Ascending aorta (tissue), 2 donors: ENCODE measurements at regions of chr17 and their contacts with region 1.

Region 1: DNA sequence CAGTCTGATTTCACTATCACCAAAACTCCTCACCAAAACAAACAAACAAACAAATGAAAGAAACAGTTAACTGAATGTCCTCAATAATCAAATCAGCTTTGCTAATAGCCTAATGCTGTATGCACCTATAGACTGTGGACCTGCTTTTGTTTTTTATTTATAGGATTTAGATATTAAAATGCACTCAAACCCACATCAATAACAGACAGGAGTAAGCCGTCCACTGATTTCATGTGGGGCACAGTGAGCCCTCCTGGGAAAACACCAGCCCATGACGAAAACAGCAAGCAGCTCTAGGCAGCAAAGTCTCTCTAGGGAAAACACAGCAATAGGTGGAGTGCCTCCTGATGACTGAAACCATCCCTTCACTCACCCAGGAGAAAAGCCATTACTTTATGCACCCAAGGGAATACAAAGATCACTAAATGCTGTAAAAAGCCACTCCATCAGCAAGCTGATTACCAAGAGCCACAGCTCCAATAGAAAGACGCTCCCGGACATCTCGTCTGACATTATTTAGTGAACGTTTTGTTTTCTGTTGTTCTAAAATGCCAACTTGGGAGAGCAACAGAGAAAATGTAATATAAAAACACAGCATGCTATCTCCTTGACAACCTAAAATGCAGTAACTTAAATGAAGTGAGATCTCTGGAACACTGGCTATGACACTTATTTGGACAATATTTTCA is 47.8 kb downstream of the ANKFY1 start:
- DNase-seq: no peak
- H3K4me3 ChIP-seq: no peak overlapping the region
- H3K27ac ChIP-seq: no peak overlapping the region
- H3K4me1 ChIP-seq: peaks cover 5 to 24% of the 10 kb centered on the region in 2 donors
- H3K27me3 ChIP-seq: no peaks in the 10 kb centered on the region
- CTCF ChIP-seq: no peak

Region 2: DNA sequence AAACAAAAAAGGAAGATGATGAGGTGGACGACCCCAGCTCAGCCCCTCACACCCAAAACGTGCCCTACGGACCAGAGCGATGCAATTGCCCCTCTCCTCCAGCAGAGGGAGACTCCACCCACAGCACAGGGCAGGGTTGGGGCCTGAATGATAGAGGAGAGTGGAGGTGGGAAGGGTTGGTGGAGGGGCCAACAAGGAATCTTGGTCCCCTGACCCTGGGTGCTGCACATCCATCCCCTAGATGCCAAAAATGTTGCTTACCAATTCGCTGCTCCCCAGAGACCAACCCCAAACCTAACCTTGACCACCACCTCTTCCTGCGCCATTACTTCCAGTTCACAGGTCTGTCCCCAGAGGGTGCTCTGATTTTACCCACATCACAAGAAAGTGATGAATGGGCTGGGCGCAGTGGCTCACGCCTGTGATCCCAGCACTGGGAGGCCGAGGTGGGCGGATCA is 532.9 kb before region 1 on chr17:
- intact Hi-C with region 1: no loop called
- DNase-seq: no peak
- H3K4me3 ChIP-seq: no peak overlapping the region
- H3K27ac ChIP-seq: no peak overlapping the region
- H3K4me1 ChIP-seq: no peaks in the 10 kb centered on the region
- H3K27me3 ChIP-seq: no peaks in the 10 kb centered on the region
- CTCF ChIP-seq: peak; percentile 52 to 74 (median 65)

Region 3: GRCh38 chr17:4187076-4187475 is 28.9 kb before region 1 on chr17:
- intact Hi-C with region 1: no loop called
- DNase-seq: no peak
- H3K4me3 ChIP-seq: no peak overlapping the region
- H3K27ac ChIP-seq: no peak overlapping the region
- H3K4me1 ChIP-seq: peaks cover 3 to 4% of the 10 kb centered on the region in 2 donors
- H3K27me3 ChIP-seq: no peaks in the 10 kb centered on the region
- CTCF ChIP-seq: no peak

Region 4: DNA sequence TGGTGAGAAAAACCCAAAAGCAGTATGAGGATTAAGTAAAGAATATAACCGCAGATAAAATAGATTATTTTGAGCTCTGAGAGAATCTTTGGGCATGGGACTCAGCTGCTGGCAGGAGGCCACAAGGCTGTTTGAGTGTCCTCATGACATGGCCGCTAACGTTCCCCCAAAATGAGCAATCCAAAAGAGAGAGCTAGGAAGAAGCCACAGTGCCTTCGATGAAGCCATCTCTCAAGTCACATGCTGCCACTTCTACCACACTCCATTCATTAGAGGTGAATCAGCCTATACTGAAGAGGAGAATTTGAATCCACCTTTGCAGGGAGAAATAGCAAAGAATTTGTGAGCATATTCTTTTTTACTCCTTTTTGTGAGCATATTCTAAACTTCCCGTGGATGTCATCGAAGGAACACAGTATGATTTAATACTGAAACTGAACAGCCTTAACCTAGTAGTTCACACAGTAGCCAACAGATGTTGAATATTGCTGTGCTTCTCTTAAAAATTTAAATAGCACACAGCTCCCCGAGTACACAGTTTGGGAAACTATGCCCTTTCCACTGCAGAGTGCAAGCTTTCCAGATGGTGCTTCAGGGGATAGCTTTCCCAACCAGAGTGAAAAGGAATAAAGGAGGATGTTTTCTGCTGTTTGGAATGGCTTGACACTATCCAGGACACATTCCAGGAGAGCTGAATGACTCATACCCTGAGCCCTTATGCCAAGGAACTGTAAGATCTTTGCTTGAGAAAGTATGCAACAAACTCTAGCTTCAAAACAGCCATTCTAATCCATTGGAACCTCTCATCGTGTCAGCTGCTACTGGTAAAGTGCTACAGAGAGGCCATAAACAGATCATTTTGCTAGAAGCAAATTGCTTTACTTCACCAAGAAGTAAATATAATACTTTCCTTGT is 13.9 kb after region 1 on chr17:
- intact Hi-C with region 1: loop called (anchors 2 kb)
- DNase-seq: peak in 1 of 2 donors; percentile 80
- H3K4me3 ChIP-seq: peak overlapping the region in 1 of 2 donors; percentile 46
- H3K27ac ChIP-seq: peak overlapping the region; percentile 82 to 84
- H3K4me1 ChIP-seq: peaks cover 10 to 59% of the 10 kb centered on the region in 2 donors
- H3K27me3 ChIP-seq: no peaks in the 10 kb centered on the region
- CTCF ChIP-seq: no peak

Region 5: DNA sequence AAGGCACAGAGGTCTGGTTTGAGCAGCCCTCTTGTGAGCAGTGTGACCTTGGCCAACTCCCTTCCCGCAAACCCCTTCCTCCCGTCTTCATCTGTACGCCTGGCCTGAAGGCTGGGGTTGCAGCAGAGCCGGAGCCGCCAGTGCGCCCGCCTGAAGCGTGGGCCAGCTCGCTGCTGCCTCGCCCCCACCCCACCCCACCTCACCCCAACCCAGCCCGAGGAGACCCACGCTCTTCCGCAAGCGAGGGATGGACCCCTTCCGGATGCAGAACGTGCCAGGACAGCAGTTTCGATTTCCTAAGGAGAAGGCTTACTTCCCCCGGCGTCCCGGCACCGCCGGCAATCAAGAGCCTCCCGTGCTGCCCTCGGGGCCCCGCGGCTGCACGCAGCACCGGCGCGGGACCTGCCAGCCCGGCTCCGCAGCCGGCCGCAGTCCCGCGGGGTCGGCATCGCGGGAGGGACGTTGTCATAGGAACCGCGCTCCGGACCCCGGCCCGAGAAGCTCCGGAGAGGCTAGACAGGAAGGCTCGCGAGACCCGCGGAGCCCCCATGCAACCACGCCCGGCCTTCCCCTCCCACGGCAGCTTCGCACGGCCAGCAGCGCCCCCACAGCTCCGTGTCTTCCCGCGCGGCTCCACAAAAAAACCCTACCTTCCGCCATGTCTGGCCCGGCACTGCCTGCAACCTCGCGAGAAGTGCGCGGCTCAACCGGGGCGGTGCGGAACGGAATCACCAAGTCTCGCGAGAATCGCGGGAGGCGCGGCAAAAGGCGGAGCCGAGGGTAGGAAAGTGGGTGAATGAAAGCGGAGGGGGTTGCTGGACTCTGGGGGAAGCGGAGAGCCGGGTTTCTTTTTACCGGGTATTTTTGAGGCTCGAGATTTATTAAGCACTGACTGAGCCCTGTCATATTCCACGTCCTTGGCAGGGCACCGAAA is 47.5 kb after region 1 on chr17 and contains the start of gene ANKFY1:
- intact Hi-C with region 1: loop called (anchors 1 kb)
- DNase-seq: peak; percentile 83 to 98
- H3K4me3 ChIP-seq: peak within 1 kb of the TSS; percentile 87 to 100
- H3K27ac ChIP-seq: peak within 1 kb of the TSS; percentile 77 to 83
- H3K4me1 ChIP-seq: peaks cover 11 to 25% of the 10 kb centered on the region in 2 donors
- H3K27me3 ChIP-seq: no peaks in the 10 kb centered on the region
- CTCF ChIP-seq: peak in 2 of 3 experiments; percentile 17 to 40
- total RNA-seq, gene ANKFY1: 16.2 TPM

Region 6: DNA sequence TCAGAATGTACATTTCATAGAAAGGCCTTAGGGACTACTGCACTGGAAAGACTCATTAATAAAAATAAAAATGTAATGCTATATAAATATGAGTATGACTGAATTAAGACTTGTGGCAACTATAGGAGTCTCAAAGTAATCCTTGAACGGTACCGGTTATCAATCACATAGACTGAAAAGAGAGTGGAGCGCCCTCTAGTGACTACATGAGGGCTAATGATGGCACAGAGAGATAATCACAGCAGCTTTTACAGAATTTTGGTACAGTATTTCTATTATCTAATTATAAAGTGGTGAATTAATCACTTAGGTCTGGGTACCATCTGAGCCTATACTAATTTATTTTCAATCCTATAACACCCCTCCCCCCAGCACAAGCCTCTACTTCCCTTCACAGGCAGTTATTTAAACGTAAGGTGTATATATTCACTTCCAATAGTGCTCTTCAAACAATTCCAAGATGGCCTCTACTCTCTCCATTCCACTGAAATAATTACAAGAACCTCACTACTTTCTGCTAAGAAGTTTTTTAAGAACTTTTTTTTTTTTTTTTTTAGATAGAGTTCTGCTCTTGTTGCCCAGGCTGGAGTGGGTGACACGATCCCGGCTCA is 88.5 kb after region 1 on chr17:
- intact Hi-C with region 1: loop called (anchors 2 kb)
- DNase-seq: no peak
- H3K4me3 ChIP-seq: no peak overlapping the region
- H3K27ac ChIP-seq: no peak overlapping the region
- H3K4me1 ChIP-seq: peaks cover 0 to 5% of the 10 kb centered on the region in 2 donors
- H3K27me3 ChIP-seq: no peaks in the 10 kb centered on the region
- CTCF ChIP-seq: peak; percentile 31 to 68 (median 67)

Region 7: GRCh38 chr17:4412933-4413831 is 197.2 kb after region 1 on chr17:
- intact Hi-C with region 1: loop called (anchors 1 kb)
- DNase-seq: peak; percentile 42 to 96
- H3K4me3 ChIP-seq: no peak overlapping the region
- H3K27ac ChIP-seq: no peak overlapping the region
- H3K4me1 ChIP-seq: peaks cover 0 to 4% of the 10 kb centered on the region in 2 donors
- H3K27me3 ChIP-seq: no peaks in the 10 kb centered on the region
- CTCF ChIP-seq: peak; percentile 89 to 94 (median 89)

Region 8: GRCh38 chr17:4463818-4464476 is 247.9 kb after region 1 on chr17:
- intact Hi-C with region 1: no loop called
- DNase-seq: no peak
- H3K4me3 ChIP-seq: no peak overlapping the region
- H3K27ac ChIP-seq: no peak overlapping the region
- H3K4me1 ChIP-seq: no peaks in the 10 kb centered on the region
- H3K27me3 ChIP-seq: no peaks in the 10 kb centered on the region
- CTCF ChIP-seq: no peak